Activated B cell treated with CpG ODN at 0.5 μM for 24 hours (primary cell): ENCODE measurements at regions of chr2 and their contacts with region 1.

Region 1: GRCh38 chr2:191165176-191165643 is 14.4 kb upstream of the STAT4 start:
- DNase-seq: no peak
- ATAC-seq: no peak
- H3K4me3 Mint-ChIP-seq: no peak overlapping the region
- H3K27ac Mint-ChIP-seq: no peak overlapping the region
- H3K4me1 Mint-ChIP-seq: peaks cover 2% of the 10 kb centered on the region
- H3K27me3 Mint-ChIP-seq: peaks cover 10% of the 10 kb centered on the region
- CTCF ChIP-seq: no peak

Region 2: GRCh38 chr2:191051825-191052778 is 113.1 kb before region 1 on chr2:
- CTCF ChIA-PET with region 1: interaction called, 18 read pairs
- POLR2A ChIA-PET with region 1: no interaction called
- intact Hi-C with region 1: no loop called
- DNase-seq: no peak
- ATAC-seq: peak; percentile 62
- H3K4me3 Mint-ChIP-seq: no peak overlapping the region
- H3K27ac Mint-ChIP-seq: no peak overlapping the region
- H3K4me1 Mint-ChIP-seq: no peaks in the 10 kb centered on the region
- H3K27me3 Mint-ChIP-seq: peaks cover 9% of the 10 kb centered on the region
- CTCF ChIP-seq: peak; percentile 70

Region 3: DNA sequence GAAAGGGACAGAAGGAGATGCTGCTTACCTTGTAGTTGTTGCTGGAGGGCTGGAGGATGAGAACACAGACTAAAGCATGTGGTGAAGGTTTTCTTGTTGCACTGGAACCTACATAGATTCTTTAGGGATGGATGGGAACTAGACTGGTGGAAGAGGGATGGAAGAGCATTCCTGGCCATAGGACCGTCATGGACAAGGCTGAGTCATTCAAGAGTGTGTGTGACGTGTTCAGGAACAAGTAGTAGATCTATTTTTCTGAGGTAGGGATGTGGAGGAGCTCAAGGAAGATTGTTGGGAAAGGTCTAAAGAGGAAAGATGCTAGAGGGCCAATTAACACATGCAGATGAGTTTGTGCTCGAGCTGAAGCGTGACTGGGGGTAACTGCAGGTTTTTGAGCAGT is 21.0 kb before region 1 on chr2:
- CTCF ChIA-PET with region 1: no interaction called
- POLR2A ChIA-PET with region 1: no interaction called
- intact Hi-C with region 1: loop called (anchors 1 kb)
- DNase-seq: no peak
- ATAC-seq: no peak
- H3K4me3 Mint-ChIP-seq: no peak overlapping the region
- H3K27ac Mint-ChIP-seq: no peak overlapping the region
- H3K4me1 Mint-ChIP-seq: peaks cover 4% of the 10 kb centered on the region
- H3K27me3 Mint-ChIP-seq: peaks cover 8% of the 10 kb centered on the region
- CTCF ChIP-seq: no peak

Region 4: DNA sequence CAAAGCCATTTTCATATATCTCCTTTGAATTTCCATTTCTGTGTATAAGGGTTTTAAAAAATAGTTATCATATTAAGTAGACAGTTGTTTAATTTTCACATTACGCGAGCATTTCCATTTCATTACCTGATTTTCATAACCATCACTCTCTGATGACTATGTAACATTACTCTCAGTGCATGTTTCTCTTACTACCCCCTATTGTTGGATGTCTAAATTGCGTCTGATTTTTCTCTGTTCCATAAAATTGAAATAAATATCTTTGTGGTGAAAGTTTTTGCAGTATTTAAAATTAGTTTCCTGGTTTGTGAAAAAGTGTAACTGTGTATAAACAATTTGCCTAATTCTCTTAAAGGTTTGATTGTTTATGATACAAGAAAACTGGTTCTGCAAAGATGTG is 203.8 kb after region 1 on chr2:
- CTCF ChIA-PET with region 1: no interaction called
- POLR2A ChIA-PET with region 1: no interaction called
- intact Hi-C with region 1: loop called (anchors 2 kb)
- DNase-seq: no peak
- ATAC-seq: no peak
- H3K4me3 Mint-ChIP-seq: no peak overlapping the region
- H3K27ac Mint-ChIP-seq: no peak overlapping the region
- H3K4me1 Mint-ChIP-seq: no peaks in the 10 kb centered on the region
- H3K27me3 Mint-ChIP-seq: no peaks in the 10 kb centered on the region
- CTCF ChIP-seq: no peak

Region 5: GRCh38 chr2:191501561-191502168 is 336.5 kb after region 1 on chr2:
- CTCF ChIA-PET with region 1: interaction called, 3 read pairs
- POLR2A ChIA-PET with region 1: no interaction called
- intact Hi-C with region 1: loop called (anchors 1 kb)
- DNase-seq: no peak
- ATAC-seq: no peak
- H3K4me3 Mint-ChIP-seq: no peak overlapping the region
- H3K27ac Mint-ChIP-seq: no peak overlapping the region
- H3K4me1 Mint-ChIP-seq: no peaks in the 10 kb centered on the region
- H3K27me3 Mint-ChIP-seq: peaks cover 8% of the 10 kb centered on the region
- CTCF ChIP-seq: no peak

Region 6: DNA sequence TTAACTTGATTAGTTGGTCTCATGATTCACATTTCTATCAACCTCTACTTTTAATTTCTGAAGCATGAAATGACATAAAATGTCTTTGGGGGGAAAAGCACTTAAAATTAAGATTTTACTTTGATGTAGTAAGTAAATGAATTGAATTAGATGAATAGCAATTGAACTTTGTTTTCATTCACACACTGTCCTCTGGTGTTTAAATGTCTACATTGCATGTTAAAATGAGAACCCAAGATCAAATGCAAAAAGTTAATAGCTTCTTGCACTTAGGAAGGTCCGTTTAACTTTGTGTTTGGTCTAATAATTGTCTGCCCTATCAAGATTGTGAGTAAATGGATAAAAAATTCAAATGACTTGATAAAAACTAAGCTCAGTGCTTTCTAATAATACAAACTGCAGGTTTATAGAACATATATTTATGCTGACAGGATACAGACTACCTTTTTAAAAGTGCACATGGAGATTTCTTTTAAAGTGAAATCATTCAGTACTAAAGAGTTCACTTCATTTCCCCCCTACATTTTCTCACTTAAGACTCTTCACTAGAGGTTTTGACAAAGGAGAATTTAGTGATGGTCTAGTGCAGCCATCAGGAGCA is 356.5 kb after region 1 on chr2:
- CTCF ChIA-PET with region 1: interaction called, 78 read pairs
- POLR2A ChIA-PET with region 1: no interaction called
- intact Hi-C with region 1: loop called (anchors 1 kb)
- DNase-seq: no peak
- ATAC-seq: no peak
- H3K4me3 Mint-ChIP-seq: no peak overlapping the region
- H3K27ac Mint-ChIP-seq: no peak overlapping the region
- H3K4me1 Mint-ChIP-seq: no peaks in the 10 kb centered on the region
- H3K27me3 Mint-ChIP-seq: peaks cover 9% of the 10 kb centered on the region
- CTCF ChIP-seq: peak; percentile 78

Region 7: GRCh38 chr2:192029089-192029488 is 863.9 kb after region 1 on chr2:
- CTCF ChIA-PET with region 1: no interaction called
- POLR2A ChIA-PET with region 1: no interaction called
- intact Hi-C with region 1: no loop called
- DNase-seq: no peak
- ATAC-seq: no peak
- H3K4me3 Mint-ChIP-seq: no peak overlapping the region
- H3K27ac Mint-ChIP-seq: no peak overlapping the region
- H3K4me1 Mint-ChIP-seq: no peaks in the 10 kb centered on the region
- H3K27me3 Mint-ChIP-seq: peaks cover 3% of the 10 kb centered on the region
- CTCF ChIP-seq: no peak